ENCODE measurements at regions of chr12 and their contacts with region 1.

Region 1: GRCh38 chr12:14239350-14239934 is 126.0 kb upstream of the ATF7IP start:
- DNase-seq: peak in 3 of 5 donors; percentile 22 to 67 (median 54)
- ATAC-seq: peak; percentile 47 to 99 (median 91)
- H3K4me3 ChIP-seq: peak overlapping the region in 8 of 12 donors; percentile 6 to 43 (median 12)
- H3K27ac ChIP-seq: peak overlapping the region in 7 of 12 donors; percentile 15 to 62 (median 42)
- H3K4me1 ChIP-seq: peaks cover 0 to 19% (median 0%) of the 10 kb centered on the region in 12 donors
- H3K27me3 ChIP-seq: no peaks in the 10 kb centered on the region
- CTCF ChIP-seq: peak in 3 of 12 donors; percentile 7 to 22 (median 13)
- POLR2A ChIP-seq: no peak

Region 2: GRCh38 chr12:14138495-14138894 is 100.9 kb before region 1 on chr12:
- intact Hi-C with region 1: no loop called
- DNase-seq: no peak
- ATAC-seq: no peak
- H3K4me3 ChIP-seq: no peak overlapping the region
- H3K27ac ChIP-seq: no peak overlapping the region
- H3K4me1 ChIP-seq: no peaks in the 10 kb centered on the region
- H3K27me3 ChIP-seq: peaks cover 0 to 8% (median 0%) of the 10 kb centered on the region in 9 donors
- CTCF ChIP-seq: peak in 3 of 12 donors; percentile 9 to 12 (median 12)
- POLR2A ChIP-seq: no peak

Region 3: GRCh38 chr12:14365294-14366208 is 126.1 kb after region 1 on chr12 and contains the start of gene ATF7IP:
- intact Hi-C with region 1: loop called in 3 of 10 experiments (anchors 5 kb)
- DNase-seq: peak; percentile 96 to 97 (median 97)
- ATAC-seq: peak; percentile 97 to 99 (median 98)
- H3K4me3 ChIP-seq: peak within 1 kb of the TSS; percentile 52 to 84 (median 69)
- H3K27ac ChIP-seq: peak within 1 kb of the TSS; percentile 90 to 98 (median 95)
- H3K4me1 ChIP-seq: peaks cover 0 to 25% (median 7%) of the 10 kb centered on the region in 12 donors
- H3K27me3 ChIP-seq: no peaks in the 10 kb centered on the region
- CTCF ChIP-seq: peak in 9 of 12 donors; percentile 21 to 59 (median 34)
- POLR2A ChIP-seq: peak in 1 of 2 donors; percentile 85
- total RNA-seq, gene ATF7IP: 39.8 to 82.4 (median 63.6) TPM

Region 4: DNA sequence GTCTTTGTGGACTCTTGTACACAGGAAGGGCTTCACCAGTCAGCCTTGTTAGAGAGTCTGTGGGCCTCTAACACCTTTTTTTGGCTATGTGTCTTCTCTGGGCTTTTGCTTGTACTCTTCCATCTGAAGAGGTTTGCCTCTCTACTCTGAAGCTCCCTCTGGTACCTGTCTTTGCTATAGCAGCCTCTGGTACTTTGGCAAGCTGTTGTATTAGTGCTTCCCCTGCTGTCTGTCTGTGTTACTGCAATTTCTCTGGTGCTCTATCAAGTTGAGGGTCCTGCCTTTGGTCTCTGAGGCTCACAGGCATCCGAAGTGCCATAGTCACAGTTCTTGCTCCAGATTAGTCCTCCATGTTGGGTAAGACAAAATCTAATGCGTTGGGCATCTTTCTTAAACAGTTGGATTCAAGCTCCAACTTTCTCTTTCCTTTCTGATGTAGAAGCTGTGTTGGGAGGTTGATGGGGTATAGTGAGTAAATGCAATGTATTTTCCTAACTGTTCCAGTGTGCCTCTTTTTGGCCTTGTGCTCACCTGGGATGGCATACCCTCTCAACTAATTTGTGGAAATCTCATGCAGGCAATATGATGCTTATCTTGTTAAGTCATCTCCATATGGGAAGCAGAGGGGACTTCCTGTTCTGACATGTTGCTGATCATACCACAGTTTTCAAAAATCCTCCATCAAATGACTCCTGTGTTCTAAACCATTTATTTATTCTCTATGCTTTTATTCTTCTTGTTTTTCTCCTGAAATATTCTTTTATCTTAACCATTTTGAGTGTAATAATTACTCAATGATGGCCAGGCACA is 214.9 kb after region 1 on chr12:
- intact Hi-C with region 1: loop called in 1 of 10 experiments (anchors 10 kb)
- DNase-seq: no peak
- ATAC-seq: peak in 3 of 4 donors; percentile 45 to 71 (median 53)
- H3K4me3 ChIP-seq: no peak overlapping the region
- H3K27ac ChIP-seq: no peak overlapping the region
- H3K4me1 ChIP-seq: peaks cover 0 to 37% (median 1%) of the 10 kb centered on the region in 12 donors
- H3K27me3 ChIP-seq: no peaks in the 10 kb centered on the region
- CTCF ChIP-seq: peak; percentile 26 to 62 (median 40)
- POLR2A ChIP-seq: no peak

Region 5: DNA sequence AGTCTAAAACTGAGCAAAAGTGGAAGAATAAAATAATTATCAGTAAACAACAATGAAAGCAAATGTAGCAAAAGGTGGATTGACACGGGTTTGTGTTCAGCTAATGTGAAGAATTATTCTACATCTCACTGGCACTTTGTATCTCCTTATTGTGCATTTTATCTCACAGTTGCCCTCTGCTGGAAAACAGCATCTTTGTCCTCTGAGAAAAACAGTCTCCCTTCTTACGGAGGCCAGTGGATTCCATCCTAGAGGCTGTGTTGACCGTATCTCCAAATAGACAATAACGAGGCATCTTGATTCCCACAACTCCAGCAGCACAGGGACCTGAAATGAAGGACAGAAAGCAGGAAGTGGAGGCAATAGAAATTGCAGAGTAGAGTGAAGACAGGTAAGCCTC is 379.5 kb after region 1 on chr12:
- intact Hi-C with region 1: loop called (anchors 2 to 10 kb)
- DNase-seq: peak in 1 of 5 donors; percentile 11
- ATAC-seq: peak in 2 of 4 donors; percentile 44 to 75
- H3K4me3 ChIP-seq: no peak overlapping the region
- H3K27ac ChIP-seq: no peak overlapping the region
- H3K4me1 ChIP-seq: peaks cover 0 to 16% (median 5%) of the 10 kb centered on the region in 12 donors
- H3K27me3 ChIP-seq: no peaks in the 10 kb centered on the region
- CTCF ChIP-seq: peak in 10 of 12 donors; percentile 23 to 60 (median 48)
- POLR2A ChIP-seq: no peak

Region 6: DNA sequence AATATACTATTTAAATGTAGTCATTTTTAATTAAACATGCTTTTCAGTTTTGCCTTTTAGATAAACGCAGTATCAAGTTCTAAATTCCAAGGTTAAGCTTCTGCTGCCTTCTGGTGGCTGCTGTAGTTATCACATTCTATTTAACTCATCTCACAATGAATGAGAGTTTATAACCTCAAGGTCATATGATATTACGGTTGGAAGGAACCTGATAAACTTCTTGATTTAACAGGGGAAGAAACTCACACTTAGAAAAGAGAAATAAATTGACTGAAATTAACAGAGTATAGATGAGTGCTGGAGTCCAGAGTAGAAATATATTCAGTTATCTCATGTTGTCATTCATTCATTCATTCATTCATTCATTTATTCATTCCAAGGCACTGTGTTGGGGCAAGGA is 425.1 kb after region 1 on chr12:
- intact Hi-C with region 1: loop called in 9 of 10 experiments (anchors 2 to 10 kb)
- DNase-seq: no peak
- ATAC-seq: peak in 2 of 4 donors; percentile 58 to 64
- H3K4me3 ChIP-seq: no peak overlapping the region
- H3K27ac ChIP-seq: no peak overlapping the region
- H3K4me1 ChIP-seq: peaks cover 0 to 3% (median 0%) of the 10 kb centered on the region in 12 donors
- H3K27me3 ChIP-seq: no peaks in the 10 kb centered on the region
- CTCF ChIP-seq: peak; percentile 50 to 81 (median 69)
- POLR2A ChIP-seq: no peak

Region 7: DNA sequence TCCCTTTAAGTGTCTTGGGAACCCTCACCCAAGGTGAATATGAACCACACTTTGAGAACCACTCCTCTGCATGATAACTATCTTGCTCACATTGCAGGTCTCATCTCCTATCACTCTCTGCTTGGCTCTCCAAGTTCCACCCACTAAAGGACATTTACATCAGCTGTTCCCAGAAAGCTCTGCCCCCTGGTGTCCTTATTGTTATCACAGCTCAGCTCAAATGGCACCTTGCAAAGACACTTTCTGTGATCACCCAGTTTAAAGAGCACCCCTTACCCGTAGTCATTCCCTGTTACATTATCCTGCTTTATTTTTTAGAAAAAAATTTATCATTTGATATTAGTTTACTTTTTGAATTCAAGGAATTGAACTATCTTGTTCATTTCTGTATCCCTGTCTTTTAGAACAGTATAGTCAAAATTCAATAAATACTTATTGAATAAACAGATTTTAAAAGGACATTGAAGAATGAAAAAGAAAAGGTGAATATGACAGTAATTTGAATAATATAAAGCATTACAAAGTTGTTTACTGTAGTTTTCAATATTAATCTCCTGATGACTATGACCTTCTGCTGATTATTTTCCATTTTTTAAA is 477.5 kb after region 1 on chr12:
- intact Hi-C with region 1: loop called in 3 of 10 experiments (anchors 2 to 5 kb)
- DNase-seq: no peak
- ATAC-seq: peak in 3 of 4 donors; percentile 37 to 73 (median 38)
- H3K4me3 ChIP-seq: no peak overlapping the region
- H3K27ac ChIP-seq: no peak overlapping the region
- H3K4me1 ChIP-seq: no peaks in the 10 kb centered on the region
- H3K27me3 ChIP-seq: no peaks in the 10 kb centered on the region
- CTCF ChIP-seq: peak; percentile 28 to 66 (median 50)
- POLR2A ChIP-seq: no peak